HepG2 (cell line): ENCODE measurements at regions of chr6 and their contacts with region 1.

Region 1: DNA sequence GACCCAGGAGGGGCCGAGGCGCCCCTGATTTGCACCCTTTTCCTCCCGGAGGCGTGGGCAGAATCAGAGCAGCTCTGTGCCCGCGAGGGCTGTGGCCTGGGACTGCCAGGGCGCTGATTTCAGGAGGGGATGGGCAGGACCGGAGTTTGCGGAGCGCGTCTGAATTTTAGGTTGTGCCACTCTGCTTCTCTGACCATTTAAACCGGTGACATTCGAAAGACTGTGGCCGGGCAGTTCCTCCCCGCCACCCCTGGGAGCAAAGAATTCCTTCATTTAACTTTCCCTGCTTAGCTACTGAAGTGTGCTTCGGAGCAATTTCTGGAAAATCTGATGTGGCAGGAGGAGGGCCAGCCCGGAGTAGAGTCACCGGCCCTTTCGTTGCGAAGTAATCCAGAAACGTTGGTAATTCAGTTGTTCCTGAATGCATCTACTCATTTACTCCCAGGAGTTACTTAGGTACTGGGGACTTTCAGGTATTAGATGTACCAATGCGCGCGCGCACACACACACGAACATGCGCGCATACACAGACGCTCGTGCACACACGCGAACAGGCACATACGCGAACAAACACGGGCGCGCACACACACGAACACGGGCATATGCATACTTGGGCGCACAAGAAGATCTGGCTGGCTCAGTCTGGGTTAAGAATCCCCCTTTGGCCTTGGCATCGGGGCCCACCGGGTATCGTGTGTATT is 568 bp downstream of the CCDC170 start:
- DNase-seq: peak; percentile 57
- ATAC-seq: peak; percentile 27
- H3K4me3 ChIP-seq: peak overlapping the region; percentile 95 to 99 (median 97)
- H3K27ac ChIP-seq: peak overlapping the region; percentile 86
- H3K4me1 ChIP-seq: peaks cover 63% of the 10 kb centered on the region
- H3K27me3 ChIP-seq: no peaks in the 10 kb centered on the region; a peak in 1 of 5 replicates
- CTCF ChIP-seq: no peak
- EP300 ChIP-seq: 0 out of 4 replicates have a peak, but pooled peaks of 1 of the 2 experiments have one; percentile 4
- POLR2A ChIP-seq: peak in 1 of 2 experiments; percentile 59; a peak in 1 of 4 replicates
- RAD21 ChIP-seq: no peak

Region 2: GRCh38 chr6:150835620-150836019 is 658.8 kb before region 1 on chr6:
- CTCF ChIA-PET with region 1: no interaction called
- POLR2A ChIA-PET with region 1: no interaction called
- in situ Hi-C with region 1: no loop called
- intact Hi-C with region 1: no loop called
- DNase-seq: no peak
- ATAC-seq: no peak
- H3K4me3 ChIP-seq: no peak overlapping the region
- H3K27ac ChIP-seq: no peak overlapping the region
- H3K4me1 ChIP-seq: no peaks in the 10 kb centered on the region
- H3K27me3 ChIP-seq: peaks cover 0 to 12% of the 10 kb centered on the region in 2 experiments; a peak in 2 of 5 replicates
- CTCF ChIP-seq: no peak
- EP300 ChIP-seq: no peak
- POLR2A ChIP-seq: no peak
- RAD21 ChIP-seq: no peak

Region 3: GRCh38 chr6:151461673-151462072 is 32.7 kb before region 1 on chr6:
- CTCF ChIA-PET with region 1: no interaction called
- POLR2A ChIA-PET with region 1: no interaction called
- in situ Hi-C with region 1: no loop called
- intact Hi-C with region 1: no loop called
- DNase-seq: no peak
- ATAC-seq: no peak
- H3K4me3 ChIP-seq: no peak overlapping the region
- H3K27ac ChIP-seq: no peak overlapping the region
- H3K4me1 ChIP-seq: peaks cover 3% of the 10 kb centered on the region
- H3K27me3 ChIP-seq: no peaks in the 10 kb centered on the region
- CTCF ChIP-seq: no peak
- EP300 ChIP-seq: no peak
- POLR2A ChIP-seq: no peak
- RAD21 ChIP-seq: no peak

Region 4: DNA sequence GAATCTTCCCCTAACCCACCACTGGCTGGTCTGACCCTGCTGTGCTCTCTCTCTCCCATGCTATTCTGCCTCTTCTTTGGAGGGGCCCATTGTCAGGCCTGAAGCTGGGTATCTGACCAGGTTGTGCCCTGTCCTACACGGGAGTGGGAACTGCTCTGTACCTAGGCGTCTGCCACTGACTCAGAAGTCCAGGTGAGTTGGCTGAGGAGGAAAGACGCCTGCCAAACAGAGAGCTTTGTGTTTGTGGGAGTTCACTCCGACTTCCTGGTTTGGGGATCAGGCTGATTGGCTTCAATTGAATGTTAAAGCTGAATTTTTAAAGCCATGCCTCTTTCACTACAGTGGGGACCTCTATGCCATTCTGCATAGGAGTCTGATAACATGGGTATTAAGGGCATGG is 135.4 kb after region 1 on chr6:
- CTCF ChIA-PET with region 1: no interaction called
- POLR2A ChIA-PET with region 1: no interaction called
- in situ Hi-C with region 1: no loop called
- intact Hi-C with region 1: loop called (anchors 5 kb)
- DNase-seq: no peak
- ATAC-seq: no peak
- H3K4me3 ChIP-seq: no peak overlapping the region
- H3K27ac ChIP-seq: no peak overlapping the region
- H3K4me1 ChIP-seq: peaks cover 40% of the 10 kb centered on the region
- H3K27me3 ChIP-seq: no peaks in the 10 kb centered on the region
- CTCF ChIP-seq: no peak
- EP300 ChIP-seq: no peak
- POLR2A ChIP-seq: no peak
- RAD21 ChIP-seq: no peak

Region 5: GRCh38 chr6:151656392-151656791 is 162.0 kb after region 1 on chr6:
- CTCF ChIA-PET with region 1: no interaction called
- POLR2A ChIA-PET with region 1: no interaction called
- in situ Hi-C with region 1: no loop called
- intact Hi-C with region 1: loop called (anchors 2 kb)
- DNase-seq: no peak
- ATAC-seq: no peak
- H3K4me3 ChIP-seq: no peak overlapping the region
- H3K27ac ChIP-seq: no peak overlapping the region
- H3K4me1 ChIP-seq: peaks cover 38% of the 10 kb centered on the region
- H3K27me3 ChIP-seq: no peaks in the 10 kb centered on the region
- CTCF ChIP-seq: no peak
- EP300 ChIP-seq: no peak
- POLR2A ChIP-seq: no peak
- RAD21 ChIP-seq: no peak

Region 6: GRCh38 chr6:151681433-151682059 is 187.2 kb after region 1 on chr6:
- CTCF ChIA-PET with region 1: no interaction called
- POLR2A ChIA-PET with region 1: no interaction called
- in situ Hi-C with region 1: no loop called
- intact Hi-C with region 1: loop called (anchors 5 kb)
- DNase-seq: peak; percentile 28
- ATAC-seq: peak; percentile 70
- H3K4me3 ChIP-seq: peak overlapping the region; percentile 35 to 56 (median 42); a peak in 5 of 6 replicates
- H3K27ac ChIP-seq: no peak overlapping the region
- H3K4me1 ChIP-seq: peaks cover 47% of the 10 kb centered on the region
- H3K27me3 ChIP-seq: no peaks in the 10 kb centered on the region; a peak in 1 of 5 replicates
- CTCF ChIP-seq: no peak
- EP300 ChIP-seq: no peak
- POLR2A ChIP-seq: no peak
- RAD21 ChIP-seq: no peak